GM12878 (cell line): ENCODE measurements at regions of chr17 and their contacts with region 1.

Region 1: DNA sequence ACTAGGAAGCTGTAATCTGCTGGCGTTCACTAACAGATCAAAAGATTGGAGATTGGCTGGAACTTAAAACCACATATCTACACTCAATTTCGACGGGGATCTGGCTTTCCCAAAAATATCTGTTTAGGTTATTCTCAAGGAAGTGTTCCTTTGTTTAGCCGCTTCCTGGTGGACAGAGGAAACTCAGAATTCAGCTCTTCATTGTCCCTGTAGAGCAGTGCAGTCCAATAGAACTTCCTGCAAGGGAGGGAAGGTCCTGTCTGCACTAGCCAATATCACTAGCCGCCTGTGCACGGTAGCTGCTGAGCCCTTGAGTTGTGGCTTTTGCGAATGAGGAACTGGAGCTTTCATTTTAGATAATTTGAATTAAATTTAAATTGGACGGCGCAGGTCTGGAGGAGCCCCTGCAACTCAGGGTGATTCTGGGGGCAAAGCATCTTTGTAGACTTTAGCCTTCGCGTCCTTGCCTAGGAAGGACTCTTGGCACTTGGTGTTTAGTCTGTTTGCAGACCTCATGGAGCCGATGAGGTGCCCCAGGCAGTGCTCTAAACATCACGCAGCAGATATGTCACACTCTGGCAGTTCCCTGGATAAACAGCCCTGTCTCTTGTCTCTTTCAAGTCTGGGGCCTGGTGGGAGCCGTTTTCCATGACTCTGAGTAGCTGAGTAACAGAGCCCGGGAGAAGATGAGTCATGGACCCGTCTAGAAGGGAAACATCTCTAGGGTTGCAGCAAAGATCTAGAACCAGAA is 122.2 kb downstream of the CCDC182 start:
- DNase-seq: peak; percentile 34
- ATAC-seq: peak; percentile 96
- H3K4me3 ChIP-seq: peak overlapping the region; percentile 43
- H3K27ac ChIP-seq: peak overlapping the region; percentile 72
- H3K4me1 ChIP-seq: peaks cover 32% of the 10 kb centered on the region
- H3K27me3 ChIP-seq: no peaks in the 10 kb centered on the region
- CTCF ChIP-seq: no peak
- EP300 ChIP-seq: 0 out of 4 replicates have a peak, but pooled peaks of 1 of the 2 experiments have one; percentile 27
- POLR2A ChIP-seq: no peak
- RAD21 ChIP-seq: no peak

Region 2: DNA sequence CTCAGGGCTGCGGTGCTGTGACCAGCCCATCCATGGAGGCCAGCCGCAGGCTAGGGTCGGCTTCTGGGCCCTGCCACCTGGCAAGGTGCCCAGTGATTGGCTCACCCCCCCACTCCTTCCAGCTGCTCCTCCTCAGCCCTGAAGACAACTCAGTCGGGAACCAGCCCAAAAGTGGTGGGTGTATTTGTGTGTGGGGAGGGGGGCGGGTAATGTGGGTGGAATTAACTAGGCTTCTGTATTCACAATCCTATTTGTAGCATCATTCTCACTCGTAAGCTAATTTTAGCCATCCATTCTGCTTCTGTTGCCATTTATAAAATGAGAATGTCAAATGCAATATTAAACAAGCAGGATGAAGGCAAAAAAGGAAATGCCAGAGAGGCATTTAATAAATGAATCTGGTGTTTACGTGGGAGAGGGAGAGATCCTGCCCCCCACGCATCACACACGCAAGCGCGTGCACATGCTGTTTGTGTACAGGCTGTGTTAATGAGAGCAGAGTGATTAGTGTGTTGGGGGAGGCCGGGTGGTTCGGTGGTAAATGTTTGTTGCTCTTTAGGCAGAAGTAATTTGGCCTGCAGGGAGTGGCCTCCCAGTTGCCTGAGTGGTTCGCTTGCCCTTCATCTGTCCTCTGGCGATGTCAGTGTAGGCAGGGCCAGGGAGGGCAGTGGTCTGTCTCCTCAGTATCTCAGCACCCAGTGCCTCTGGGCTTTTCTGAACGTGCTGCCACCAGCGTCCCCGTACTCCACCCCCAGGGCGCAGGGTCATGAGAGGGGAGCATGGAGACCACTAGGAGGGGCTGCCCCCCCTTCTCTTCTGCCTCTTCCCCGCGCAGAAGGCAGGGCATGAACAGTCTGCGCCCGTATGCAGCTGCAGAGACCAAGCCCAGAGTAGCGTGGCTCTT is 17.8 kb before region 1 on chr17:
- CTCF ChIA-PET with region 1: interaction called, 6 read pairs
- POLR2A ChIA-PET with region 1: no interaction called
- RAD21 ChIA-PET with region 1: no interaction called
- SMC1A ChIA-PET with region 1: interaction called, 13 read pairs
- in situ Hi-C with region 1: no loop called
- intact Hi-C with region 1: no loop called
- DNase-seq: no peak
- ATAC-seq: peak; percentile 80
- H3K4me3 ChIP-seq: no peak overlapping the region
- H3K27ac ChIP-seq: peak overlapping the region; percentile 67
- H3K4me1 ChIP-seq: peaks cover 42% of the 10 kb centered on the region
- H3K27me3 ChIP-seq: no peaks in the 10 kb centered on the region
- CTCF ChIP-seq: peak in 2 of 3 experiments; percentile 5 to 8; a peak in 1 of 6 replicates
- EP300 ChIP-seq: 0 out of 4 replicates have a peak, but pooled peaks of 1 of the 2 experiments have one; percentile 26
- POLR2A ChIP-seq: no peak; the same call in 1 of the 2 replicates
- RAD21 ChIP-seq: peak; percentile 33; the same call in 1 of the 2 replicates

Region 3: GRCh38 chr17:57612202-57613071 is 10.4 kb before region 1 on chr17:
- CTCF ChIA-PET with region 1: interaction called, 4 read pairs
- POLR2A ChIA-PET with region 1: no interaction called
- RAD21 ChIA-PET with region 1: no interaction called
- SMC1A ChIA-PET with region 1: interaction called, 13 read pairs
- in situ Hi-C with region 1: no loop called
- intact Hi-C with region 1: no loop called
- DNase-seq: peak; percentile 38
- ATAC-seq: peak; percentile 98
- H3K4me3 ChIP-seq: no peak overlapping the region
- H3K27ac ChIP-seq: no peak overlapping the region; the same call in 1 of the 2 replicates
- H3K4me1 ChIP-seq: peaks cover 4% of the 10 kb centered on the region
- H3K27me3 ChIP-seq: no peaks in the 10 kb centered on the region
- CTCF ChIP-seq: no peak
- EP300 ChIP-seq: no peak; a peak in 1 of 4 replicates
- POLR2A ChIP-seq: no peak
- RAD21 ChIP-seq: no peak